Sciatic nerve (tissue), 2 donors: ENCODE measurements at regions of chr1 and their contacts with region 1.

Region 1: DNA sequence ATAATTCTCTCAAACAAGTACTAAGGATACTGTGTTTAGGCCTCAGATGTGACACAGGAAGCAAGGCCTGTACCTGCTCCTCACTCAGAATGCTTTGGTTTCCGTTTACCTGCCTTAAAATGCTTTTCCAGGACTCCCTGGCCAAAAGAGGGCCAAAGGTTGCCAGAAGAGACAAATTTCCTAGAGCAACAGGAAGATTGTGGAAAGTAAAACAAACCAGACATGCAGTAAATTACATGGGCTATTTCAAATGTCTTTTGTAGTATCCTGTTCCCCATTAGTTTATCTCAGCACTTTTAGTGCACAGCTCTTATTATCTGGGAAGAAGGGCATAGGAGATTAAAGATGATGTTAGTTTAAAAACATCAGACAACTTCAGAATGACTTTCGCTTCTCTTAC is 280.0 kb downstream of the NFIA start:
- DNase-seq: no peak
- ATAC-seq: no peak

Region 2: GRCh38 chr1:61190618-61191432 is 171.5 kb before region 1 on chr1:
- intact Hi-C with region 1: no loop called
- DNase-seq: no peak
- ATAC-seq: peak; percentile 31

Region 3: GRCh38 chr1:61332796-61333195 is 29.6 kb before region 1 on chr1:
- intact Hi-C with region 1: loop called (anchors 1 kb)
- DNase-seq: no peak
- ATAC-seq: no peak